MCF 10A (cell line): ENCODE measurements at regions of chr6 and their contacts with region 1.

Region 1: DNA sequence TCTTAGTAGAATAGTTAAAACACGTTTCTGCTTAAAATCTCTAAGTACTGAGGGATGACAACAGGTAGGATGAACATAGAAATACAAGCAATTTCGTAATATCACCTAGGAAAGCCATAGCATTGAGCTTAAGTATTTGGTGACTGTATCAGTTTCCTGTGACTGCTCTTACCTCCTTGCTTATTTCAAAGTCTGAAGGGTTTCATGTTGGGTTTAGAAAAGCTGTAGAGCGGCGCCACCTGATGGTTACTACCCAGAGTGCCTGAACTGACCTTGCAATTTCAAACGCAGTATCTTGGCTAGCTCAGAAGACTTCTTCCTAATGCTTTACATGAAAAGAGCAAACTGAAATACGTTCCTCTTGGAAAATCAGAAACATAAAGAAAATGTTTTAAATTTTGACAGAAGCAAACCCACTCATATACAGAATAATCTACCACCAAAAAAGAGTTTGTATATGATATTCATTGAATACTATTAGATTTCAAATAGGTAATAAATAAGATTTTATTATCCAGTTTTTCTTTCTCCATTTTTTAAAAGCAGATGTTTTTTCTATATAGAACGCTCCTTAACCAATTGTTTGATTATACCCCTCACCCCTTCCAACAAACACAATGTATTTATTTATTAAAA is 82.3 kb upstream of the RIPOR2 start:
- DNase-seq: peak; percentile 88
- H3K4me3 Mint-ChIP-seq: peak overlapping the region; percentile 22
- H3K27ac Mint-ChIP-seq: peak overlapping the region; percentile 62
- H3K4me1 Mint-ChIP-seq: peaks cover 38% of the 10 kb centered on the region
- H3K27me3 Mint-ChIP-seq: no peaks in the 10 kb centered on the region
- CTCF ChIP-seq: peak; percentile 87

Region 2: DNA sequence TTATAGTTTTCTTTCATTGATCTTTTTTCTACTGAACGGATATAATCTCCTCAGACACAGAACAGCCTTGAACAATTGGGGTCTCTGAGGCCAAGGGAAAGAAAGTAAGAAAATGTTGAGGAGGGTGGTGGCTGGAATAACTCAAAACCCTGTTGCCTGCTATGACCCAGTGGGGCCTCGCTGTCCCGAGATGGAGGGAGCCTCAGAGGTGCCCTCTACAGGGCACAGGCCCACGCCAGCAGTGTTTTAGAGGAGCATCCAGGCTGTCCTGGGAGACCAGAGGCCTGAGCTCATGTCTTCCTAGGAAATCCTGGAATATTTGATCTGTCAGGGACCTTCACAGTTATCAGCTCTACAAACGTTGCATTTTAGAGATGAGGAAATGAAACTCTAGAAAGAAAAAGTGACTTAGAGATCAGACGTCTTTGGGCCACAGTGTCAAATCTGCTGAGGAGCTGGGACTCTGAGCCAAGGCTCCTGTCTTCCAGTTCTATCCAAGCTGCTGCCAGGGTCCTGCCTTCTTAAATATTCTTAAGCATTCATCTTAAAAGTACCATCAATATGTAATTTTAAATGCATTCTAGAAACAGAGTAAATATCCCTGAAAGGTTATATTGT is 497.0 kb before region 1 on chr6:
- CTCF ChIA-PET with region 1: no interaction called
- POLR2A ChIA-PET with region 1: no interaction called
- intact Hi-C with region 1: loop called (anchors 5 kb)
- DNase-seq: peak; percentile 63
- H3K4me3 Mint-ChIP-seq: no peak overlapping the region
- H3K27ac Mint-ChIP-seq: no peak overlapping the region
- H3K4me1 Mint-ChIP-seq: peaks cover 9% of the 10 kb centered on the region
- H3K27me3 Mint-ChIP-seq: no peaks in the 10 kb centered on the region
- CTCF ChIP-seq: peak; percentile 55

Region 3: DNA sequence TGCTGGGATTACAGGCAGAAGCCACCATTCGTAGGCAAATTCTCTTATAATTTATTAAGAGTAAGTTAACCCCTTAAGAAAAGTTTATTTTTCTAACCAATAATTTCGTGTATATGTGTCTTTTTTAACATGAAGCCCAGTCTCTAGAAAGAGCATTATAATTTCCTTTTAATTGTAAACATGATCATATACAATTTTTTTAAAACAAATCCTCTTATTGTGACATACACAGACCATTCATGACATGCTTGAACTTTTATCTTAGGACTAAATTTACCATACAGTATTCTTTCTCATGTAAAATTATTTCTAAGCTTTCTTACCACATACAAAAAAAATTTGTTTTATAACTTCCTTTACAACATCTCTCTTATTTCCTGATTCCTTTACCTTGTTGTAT is 344.4 kb before region 1 on chr6:
- CTCF ChIA-PET with region 1: no interaction called
- POLR2A ChIA-PET with region 1: no interaction called
- intact Hi-C with region 1: no loop called
- DNase-seq: no peak
- H3K4me3 Mint-ChIP-seq: no peak overlapping the region
- H3K27ac Mint-ChIP-seq: no peak overlapping the region
- H3K4me1 Mint-ChIP-seq: no peaks in the 10 kb centered on the region
- H3K27me3 Mint-ChIP-seq: no peaks in the 10 kb centered on the region
- CTCF ChIP-seq: no peak

Region 4: GRCh38 chr6:24774696-24775519 is 243.1 kb before region 1 on chr6 and contains the start of gene GMNN:
- CTCF ChIA-PET with region 1: interaction called, 9 read pairs
- POLR2A ChIA-PET with region 1: interaction called, 10 read pairs
- intact Hi-C with region 1: loop called (anchors 1 kb)
- DNase-seq: peak; percentile 96
- H3K4me3 Mint-ChIP-seq: peak within 1 kb of the TSS; percentile 98
- H3K27ac Mint-ChIP-seq: peak within 1 kb of the TSS; percentile 64
- H3K4me1 Mint-ChIP-seq: peaks cover 18% of the 10 kb centered on the region
- H3K27me3 Mint-ChIP-seq: no peaks in the 10 kb centered on the region
- CTCF ChIP-seq: no peak
- total RNA-seq, gene GMNN: 12.5 and 22.4 TPM in 2 replicates

Region 5: GRCh38 chr6:24864343-24864742 is 153.7 kb before region 1 on chr6:
- CTCF ChIA-PET with region 1: interaction called, 158 read pairs
- POLR2A ChIA-PET with region 1: interaction called, 159 read pairs
- intact Hi-C with region 1: no loop called
- DNase-seq: no peak
- H3K4me3 Mint-ChIP-seq: no peak overlapping the region
- H3K27ac Mint-ChIP-seq: no peak overlapping the region
- H3K4me1 Mint-ChIP-seq: peaks cover 6% of the 10 kb centered on the region
- H3K27me3 Mint-ChIP-seq: no peaks in the 10 kb centered on the region
- CTCF ChIP-seq: no peak

Region 6: DNA sequence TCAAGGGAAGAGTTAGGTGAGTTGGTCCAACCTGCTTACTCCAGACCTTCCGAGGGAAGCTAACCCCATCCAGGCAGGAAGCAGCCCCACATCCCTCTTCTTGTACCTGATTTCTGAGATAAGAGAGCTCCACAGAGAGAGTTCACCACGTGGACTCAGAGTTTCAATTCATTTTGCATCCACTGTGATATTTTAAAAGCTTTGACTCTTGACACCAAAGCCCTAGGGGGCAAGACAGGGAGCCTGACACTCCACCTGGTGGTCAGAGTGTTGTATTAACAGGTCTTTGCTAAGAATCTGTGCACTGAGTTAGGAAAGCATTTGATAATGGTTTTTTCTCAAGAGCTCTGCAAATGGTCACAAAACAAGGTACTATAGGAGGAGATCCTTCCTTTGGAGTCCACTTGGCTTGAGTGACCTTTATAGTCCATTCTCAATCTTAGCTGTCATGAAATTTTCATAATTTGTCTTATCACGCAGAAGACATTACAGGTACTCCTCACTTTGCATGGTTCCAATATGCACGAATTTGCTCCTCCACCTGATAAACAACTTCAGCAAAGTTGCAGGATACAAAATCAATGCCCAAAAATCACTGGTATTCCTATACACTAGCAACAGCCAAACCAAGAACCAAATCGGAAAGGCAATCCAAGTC is 26.1 kb before region 1 on chr6:
- CTCF ChIA-PET with region 1: interaction called, 11 read pairs
- POLR2A ChIA-PET with region 1: interaction called, 13 read pairs
- intact Hi-C with region 1: no loop called
- DNase-seq: peak; percentile 76
- H3K4me3 Mint-ChIP-seq: no peak overlapping the region
- H3K27ac Mint-ChIP-seq: no peak overlapping the region
- H3K4me1 Mint-ChIP-seq: peaks cover 19% of the 10 kb centered on the region
- H3K27me3 Mint-ChIP-seq: no peaks in the 10 kb centered on the region
- CTCF ChIP-seq: peak; percentile 37

Region 7: GRCh38 chr6:25070547-25071366 is 52.7 kb after region 1 on chr6:
- CTCF ChIA-PET with region 1: interaction called, 19 read pairs
- POLR2A ChIA-PET with region 1: interaction called, 9 read pairs
- intact Hi-C with region 1: loop called (anchors 1 kb)
- DNase-seq: peak; percentile 86
- H3K4me3 Mint-ChIP-seq: no peak overlapping the region
- H3K27ac Mint-ChIP-seq: no peak overlapping the region
- H3K4me1 Mint-ChIP-seq: no peaks in the 10 kb centered on the region
- H3K27me3 Mint-ChIP-seq: no peaks in the 10 kb centered on the region
- CTCF ChIP-seq: peak; percentile 91

Region 8: GRCh38 chr6:25332655-25333071 is 314.6 kb after region 1 on chr6:
- CTCF ChIA-PET with region 1: no interaction called
- POLR2A ChIA-PET with region 1: no interaction called
- intact Hi-C with region 1: no loop called
- DNase-seq: no peak
- H3K4me3 Mint-ChIP-seq: no peak overlapping the region
- H3K27ac Mint-ChIP-seq: no peak overlapping the region
- H3K4me1 Mint-ChIP-seq: peaks cover 20% of the 10 kb centered on the region
- H3K27me3 Mint-ChIP-seq: no peaks in the 10 kb centered on the region
- CTCF ChIP-seq: no peak

Region 9: DNA sequence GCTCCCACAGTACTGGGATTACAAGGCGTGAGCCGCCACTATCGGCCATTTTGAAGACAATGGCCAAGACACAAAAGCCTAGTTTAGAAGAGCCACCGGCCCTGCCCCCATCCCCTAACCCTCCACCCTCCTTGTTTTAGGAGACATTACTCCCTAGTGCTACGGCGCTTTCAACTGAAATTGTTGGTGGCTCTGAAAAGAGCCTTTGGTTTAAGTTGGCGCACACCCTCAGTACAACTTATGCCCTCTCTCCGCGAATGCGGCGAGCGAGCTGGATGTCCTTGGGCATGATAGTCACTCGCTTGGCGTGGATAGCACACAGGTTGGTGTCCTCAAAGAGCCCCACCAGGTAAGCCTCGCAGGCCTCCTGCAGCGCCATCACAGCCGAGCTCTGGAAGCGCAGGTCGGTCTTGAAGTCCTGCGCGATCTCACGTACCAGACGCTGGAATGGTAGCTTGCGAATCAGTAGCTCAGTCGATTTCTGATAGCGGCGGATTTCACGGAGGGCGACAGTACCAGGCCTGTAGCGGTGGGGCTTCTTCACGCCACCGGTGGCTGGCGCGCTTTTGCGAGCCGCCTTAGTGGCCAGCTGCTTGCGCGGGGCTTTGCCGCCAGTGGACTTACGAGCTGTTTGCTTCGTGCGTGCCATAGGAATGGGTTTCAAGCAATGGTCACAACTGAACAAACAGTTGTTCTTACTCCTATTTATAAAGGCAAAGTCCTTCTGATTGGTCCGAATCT is 1232.1 kb after region 1 on chr6:
- CTCF ChIA-PET with region 1: no interaction called
- POLR2A ChIA-PET with region 1: no interaction called
- intact Hi-C with region 1: no loop called
- DNase-seq: peak; percentile 87
- H3K4me3 Mint-ChIP-seq: peak overlapping the region; percentile 94
- H3K27ac Mint-ChIP-seq: peak overlapping the region; percentile 63
- H3K4me1 Mint-ChIP-seq: peaks cover 7% of the 10 kb centered on the region
- H3K27me3 Mint-ChIP-seq: no peaks in the 10 kb centered on the region
- CTCF ChIP-seq: peak; percentile 42